ENCODE measurements at regions of chr11 and their contacts with region 1.

Region 1: DNA sequence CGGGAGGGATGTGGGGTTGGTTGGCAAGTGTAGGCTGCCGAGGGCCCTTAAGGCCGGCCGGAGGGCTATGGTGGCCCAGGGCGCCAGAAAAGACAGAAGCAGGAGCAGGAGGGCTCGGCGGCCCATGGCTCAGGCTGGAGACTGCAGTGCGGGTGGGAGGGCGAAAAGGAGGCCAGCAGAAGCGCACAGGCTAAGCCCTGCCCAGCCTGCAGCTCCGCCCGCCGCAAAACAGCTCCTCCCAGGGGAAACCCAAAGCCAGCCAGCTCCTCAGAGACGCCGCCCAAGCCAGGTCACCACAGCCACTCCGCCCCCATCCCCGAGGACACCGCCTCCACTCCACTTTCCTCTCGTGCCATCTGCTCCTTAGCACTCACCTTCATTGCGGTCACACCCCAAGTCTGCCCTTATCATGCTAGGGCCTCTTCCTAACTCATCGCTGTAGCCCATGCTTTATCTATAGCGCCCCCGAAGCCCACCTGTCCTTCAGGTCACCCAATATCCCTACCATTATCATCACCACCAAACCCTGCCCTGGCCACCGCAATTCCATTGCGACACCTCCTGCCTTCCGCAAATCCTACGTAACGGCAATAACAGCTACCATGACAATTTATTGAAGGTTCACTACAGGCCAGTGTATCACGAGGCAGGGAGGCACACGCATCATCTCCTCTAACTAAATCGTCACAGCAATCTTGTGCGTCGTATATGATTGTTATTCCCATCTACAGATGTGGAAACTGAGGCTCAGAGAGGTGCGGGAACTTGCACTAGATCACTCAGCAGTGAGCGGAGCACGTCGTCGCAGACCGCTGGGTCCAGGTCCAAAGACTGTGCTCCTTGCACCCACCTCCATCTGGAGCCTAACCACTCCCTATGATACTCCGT is at the start of gene PRCP:
- DNase-seq: peak; percentile 95
- CTCF ChIP-seq: no peak

Region 2: DNA sequence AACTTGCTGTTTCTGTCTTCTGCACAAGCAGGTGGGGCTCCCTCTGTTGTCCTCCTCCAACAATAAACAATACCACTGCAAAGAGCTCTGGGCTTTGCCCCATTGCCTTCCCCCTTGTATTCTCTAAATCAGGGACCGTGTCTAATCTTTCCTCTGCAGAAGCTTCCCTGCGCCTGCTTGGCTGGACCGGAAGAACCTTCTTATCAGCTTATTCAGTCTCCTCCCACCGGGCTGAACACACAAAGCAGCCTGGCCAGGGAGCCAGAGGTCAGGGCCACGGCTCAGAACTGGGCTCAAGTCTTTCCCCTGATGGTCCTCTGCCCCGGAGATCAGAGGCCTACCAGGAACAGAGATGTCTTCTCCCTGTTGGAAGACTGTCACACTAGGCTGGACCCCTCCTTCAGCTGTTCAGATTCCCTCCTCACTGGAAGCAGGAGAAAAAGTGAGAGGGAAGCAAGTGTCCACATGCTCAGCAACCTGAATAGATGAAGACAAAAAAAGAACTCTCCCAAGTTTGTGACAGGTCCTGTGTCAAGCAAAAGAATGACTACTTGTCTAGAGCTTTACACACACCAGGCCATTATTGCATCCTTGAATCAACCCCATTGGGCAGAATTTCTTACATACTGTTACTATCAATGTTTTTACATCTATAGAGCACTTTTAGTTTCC is 107.5 kb after region 1 on chr11:
- in situ Hi-C with region 1: no loop called
- DNase-seq: peak; percentile 41
- CTCF ChIP-seq: no peak

Region 3: DNA sequence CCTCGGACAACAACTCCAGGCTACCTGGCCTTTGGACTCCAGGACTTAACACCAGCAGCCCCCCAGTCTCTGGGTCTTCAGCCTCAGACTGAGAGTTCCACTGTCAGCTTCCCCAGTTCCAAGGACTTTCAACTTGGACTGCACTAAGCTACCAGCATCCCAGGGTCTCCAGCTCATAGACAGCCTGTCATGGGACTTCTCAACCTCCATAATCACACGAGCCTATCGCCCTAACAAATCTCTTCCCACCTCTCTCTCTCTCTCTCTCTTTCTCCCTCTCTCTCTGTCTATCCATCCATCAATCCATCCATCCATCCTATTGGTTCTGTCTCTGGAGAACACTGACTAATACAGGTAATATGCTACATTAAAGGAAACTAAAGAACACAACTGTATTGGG is 160.4 kb after region 1 on chr11:
- in situ Hi-C with region 1: no loop called
- DNase-seq: no peak
- CTCF ChIP-seq: no peak

Region 4: GRCh38 chr11:83071567-83072349 is 171.2 kb after region 1 on chr11 and contains the start of gene RAB30:
- in situ Hi-C with region 1: loop called (anchors 10 kb)
- DNase-seq: peak; percentile 92
- CTCF ChIP-seq: no peak